OCI-LY7 (cell line): ENCODE measurements at regions of chr16 and their contacts with region 1.

Region 1: GRCh38 chr16:64809876-64810629 is 311.8 kb downstream of the CDH11 start:
- DNase-seq: no peak
- H3K4me3 ChIP-seq: no peak overlapping the region
- H3K27ac ChIP-seq: no peak overlapping the region
- H3K4me1 ChIP-seq: no peaks in the 10 kb centered on the region
- CTCF ChIP-seq: no peak

Region 2: GRCh38 chr16:64878940-64879339 is 68.9 kb after region 1 on chr16:
- CTCF ChIA-PET with region 1: no interaction called
- POLR2A ChIA-PET with region 1: no interaction called
- intact Hi-C with region 1: loop called (anchors 10 kb)
- DNase-seq: no peak
- H3K4me3 ChIP-seq: no peak overlapping the region
- H3K27ac ChIP-seq: no peak overlapping the region
- H3K4me1 ChIP-seq: no peaks in the 10 kb centered on the region
- CTCF ChIP-seq: no peak

Region 3: GRCh38 chr16:65965628-65966027 is 1155.6 kb after region 1 on chr16:
- CTCF ChIA-PET with region 1: no interaction called
- POLR2A ChIA-PET with region 1: no interaction called
- intact Hi-C with region 1: no loop called
- DNase-seq: no peak
- H3K4me3 ChIP-seq: no peak overlapping the region
- H3K27ac ChIP-seq: no peak overlapping the region
- H3K4me1 ChIP-seq: no peaks in the 10 kb centered on the region
- CTCF ChIP-seq: no peak